CD8-positive, alpha-beta T cell (primary cell): ENCODE measurements at regions of chr16 and their contacts with region 1.

Region 1: DNA sequence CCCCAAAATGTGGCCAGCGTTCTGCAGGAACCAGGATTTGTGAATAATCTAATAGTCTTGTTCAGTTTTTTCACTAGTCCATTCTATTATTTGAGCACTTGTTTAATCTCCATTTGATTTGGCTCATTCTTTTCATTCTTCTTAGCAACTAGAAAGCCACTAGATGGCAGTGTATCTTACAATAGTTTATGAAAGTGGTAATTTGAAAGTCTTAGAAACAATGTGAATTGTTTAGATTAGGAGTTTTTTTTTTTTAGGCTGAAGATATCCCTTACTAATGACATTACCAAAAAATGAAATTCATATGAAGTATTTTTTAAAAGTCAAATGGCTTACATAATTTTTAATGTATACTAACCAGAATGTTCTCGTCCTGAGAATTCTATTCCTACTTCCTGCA is 6.7 kb downstream of the ERI2 start:
- DNase-seq: peak in 1 of 9 experiments; percentile 14
- ATAC-seq: no peak
- H3K4me3 ChIP-seq: no peak overlapping the region
- H3K4me3 Mint-ChIP-seq: no peak overlapping the region
- H3K27ac ChIP-seq: no peak overlapping the region
- H3K27ac Mint-ChIP-seq: no peak overlapping the region
- H3K4me1 ChIP-seq: peaks cover 7% of the 10 kb centered on the region
- H3K4me1 Mint-ChIP-seq: peaks cover 15% of the 10 kb centered on the region
- H3K27me3 ChIP-seq: no peaks in the 10 kb centered on the region
- H3K27me3 Mint-ChIP-seq: no peaks in the 10 kb centered on the region
- CTCF ChIP-seq: peak; percentile 48

Region 2: DNA sequence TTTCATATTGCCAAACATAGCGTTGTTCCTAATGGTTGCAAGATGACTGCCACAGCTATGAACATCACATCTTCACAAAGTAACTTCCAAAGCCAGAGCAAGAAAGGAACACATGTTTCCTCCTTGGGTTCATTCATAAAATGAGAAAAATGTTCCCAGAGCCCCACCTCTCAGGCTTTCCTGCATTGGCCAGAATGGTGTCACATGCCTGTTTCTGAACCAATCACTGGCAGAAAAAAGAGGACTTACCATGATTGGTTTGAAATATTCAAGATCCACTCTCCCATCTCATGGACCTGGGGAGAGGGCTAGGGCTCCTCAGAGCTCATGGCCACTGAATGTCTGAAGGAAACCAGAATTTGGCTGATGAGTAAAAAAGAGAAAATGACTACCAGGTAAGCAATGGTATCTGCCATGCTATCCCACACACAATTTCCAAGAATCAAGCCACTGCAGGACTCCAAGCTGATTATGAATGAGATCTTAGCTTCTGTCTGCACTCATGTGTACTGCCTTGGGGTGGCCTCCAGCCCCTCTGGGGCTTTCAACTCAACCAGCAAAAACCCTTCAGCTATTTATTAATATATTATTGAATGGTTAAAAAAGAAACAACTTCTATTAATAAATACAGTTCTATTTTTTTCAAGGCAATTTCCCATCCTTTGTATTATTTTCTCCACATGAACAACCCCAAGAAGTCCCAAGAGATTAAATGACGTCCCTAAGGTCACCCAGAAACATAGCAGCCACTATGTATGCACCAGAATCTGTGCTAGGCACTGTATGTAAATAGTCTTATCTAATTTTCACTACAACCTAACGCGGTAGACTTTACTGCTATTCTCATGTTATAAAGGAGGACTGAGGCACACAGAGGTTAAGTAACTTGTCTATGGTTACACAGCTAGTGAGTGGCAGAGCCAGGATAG is 1443.3 kb before region 1 on chr16:
- CTCF ChIA-PET with region 1: no interaction called
- POLR2A ChIA-PET with region 1: no interaction called
- intact Hi-C with region 1: no loop called
- DNase-seq: no peak
- ATAC-seq: no peak
- H3K4me3 ChIP-seq: no peak overlapping the region
- H3K4me3 Mint-ChIP-seq: no peak overlapping the region
- H3K27ac ChIP-seq: no peak overlapping the region
- H3K27ac Mint-ChIP-seq: no peak overlapping the region
- H3K4me1 ChIP-seq: no peaks in the 10 kb centered on the region
- H3K4me1 Mint-ChIP-seq: no peaks in the 10 kb centered on the region
- H3K27me3 ChIP-seq: no peaks in the 10 kb centered on the region
- H3K27me3 Mint-ChIP-seq: peaks cover 2% of the 10 kb centered on the region
- CTCF ChIP-seq: no peak

Region 3: DNA sequence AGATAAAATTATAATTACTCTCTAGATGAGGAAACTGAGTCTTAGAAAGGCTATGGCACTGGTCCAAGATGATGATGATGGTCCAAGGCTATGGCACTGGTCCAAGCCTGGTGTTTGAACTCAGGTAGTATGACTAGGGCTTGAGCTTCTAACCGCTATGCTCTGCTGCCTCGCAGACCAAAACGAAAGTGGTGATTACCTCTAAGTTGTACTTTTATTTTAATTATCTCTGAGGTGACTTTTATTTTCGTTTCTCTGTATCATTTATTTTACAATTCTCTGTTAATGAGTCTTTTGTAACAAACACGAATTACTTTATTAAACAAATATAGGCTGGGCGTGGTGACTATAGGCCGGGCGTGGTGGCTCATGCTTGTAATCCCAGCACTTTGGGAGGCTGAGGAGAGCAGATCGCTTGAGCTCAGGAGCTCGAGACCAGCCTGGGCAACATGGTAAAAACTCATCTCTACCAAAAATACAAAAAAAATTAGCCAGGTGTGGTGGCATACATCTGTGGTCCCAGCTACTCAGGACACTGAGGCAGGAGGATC is 12.4 kb after region 1 on chr16:
- CTCF ChIA-PET with region 1: interaction called, 10 read pairs
- POLR2A ChIA-PET with region 1: no interaction called
- intact Hi-C with region 1: no loop called
- DNase-seq: no peak
- ATAC-seq: no peak
- H3K4me3 ChIP-seq: no peak overlapping the region
- H3K4me3 Mint-ChIP-seq: no peak overlapping the region
- H3K27ac ChIP-seq: no peak overlapping the region
- H3K27ac Mint-ChIP-seq: no peak overlapping the region
- H3K4me1 ChIP-seq: peaks cover 5% of the 10 kb centered on the region
- H3K4me1 Mint-ChIP-seq: peaks cover 7% of the 10 kb centered on the region
- H3K27me3 ChIP-seq: no peaks in the 10 kb centered on the region
- H3K27me3 Mint-ChIP-seq: no peaks in the 10 kb centered on the region
- CTCF ChIP-seq: no peak

Region 4: DNA sequence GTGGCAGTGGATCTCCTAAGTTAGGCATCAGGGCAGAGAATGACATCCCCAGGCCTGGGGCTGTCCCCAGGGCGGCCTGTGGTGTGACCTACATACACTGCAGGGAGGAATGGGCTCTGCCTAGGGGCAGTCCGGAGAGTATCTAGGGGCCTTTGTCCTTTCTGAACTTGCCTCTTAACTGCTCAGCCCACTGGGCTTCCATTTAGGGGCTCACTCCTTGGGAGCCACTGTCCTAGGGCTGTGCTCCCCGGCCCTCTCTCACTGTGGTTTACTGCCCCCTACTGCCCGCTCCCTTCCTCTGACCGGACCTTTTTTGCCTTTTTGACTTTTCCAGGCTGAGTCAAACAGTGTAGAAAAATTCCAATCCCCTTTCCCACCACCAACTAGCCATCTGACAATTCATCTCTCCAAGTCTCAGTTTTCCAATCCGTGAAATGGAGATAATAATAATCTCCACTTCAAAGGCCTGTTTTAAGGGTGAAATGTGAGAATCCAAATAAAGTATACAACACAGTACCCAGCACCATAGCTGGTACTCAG is 284.2 kb after region 1 on chr16:
- CTCF ChIA-PET with region 1: interaction called, 5 read pairs
- POLR2A ChIA-PET with region 1: no interaction called
- intact Hi-C with region 1: loop called in 1 of 2 experiments (anchors 2 kb)
- DNase-seq: peak; percentile 11 to 62 (median 46)
- ATAC-seq: no peak
- H3K4me3 ChIP-seq: no peak overlapping the region
- H3K4me3 Mint-ChIP-seq: no peak overlapping the region
- H3K27ac ChIP-seq: no peak overlapping the region
- H3K27ac Mint-ChIP-seq: no peak overlapping the region
- H3K4me1 ChIP-seq: no peaks in the 10 kb centered on the region
- H3K4me1 Mint-ChIP-seq: no peaks in the 10 kb centered on the region
- H3K27me3 ChIP-seq: no peaks in the 10 kb centered on the region
- H3K27me3 Mint-ChIP-seq: peaks cover 21% of the 10 kb centered on the region
- CTCF ChIP-seq: peak; percentile 56